Activated CD4-positive, alpha-beta memory T cell treated with anti-CD3 and anti-CD28 coated beads for 36 hours (primary cell): ENCODE measurements at regions of chr18 and their contacts with region 1.

Region 1: GRCh38 chr18:62584241-62585120 is 61.7 kb downstream of the ZCCHC2 start:
- DNase-seq: peak; percentile 91
- H3K4me3 Mint-ChIP-seq: no peak overlapping the region
- H3K27ac Mint-ChIP-seq: peak overlapping the region; percentile 94
- H3K4me1 Mint-ChIP-seq: peaks cover 39% of the 10 kb centered on the region
- H3K27me3 Mint-ChIP-seq: no peaks in the 10 kb centered on the region

Region 2: GRCh38 chr18:62324917-62325805 is 259.3 kb before region 1 on chr18 and contains the start of gene TNFRSF11A:
- CTCF ChIA-PET with region 1: no interaction called
- POLR2A ChIA-PET with region 1: no interaction called
- intact Hi-C with region 1: loop called (anchors 2 kb)
- DNase-seq: peak; percentile 79
- H3K4me3 Mint-ChIP-seq: peak within 1 kb of the TSS; percentile 79
- H3K27ac Mint-ChIP-seq: peak within 1 kb of the TSS; percentile 46
- H3K4me1 Mint-ChIP-seq: peaks cover 28% of the 10 kb centered on the region
- H3K27me3 Mint-ChIP-seq: peaks cover 68% of the 10 kb centered on the region
- total RNA-seq, gene TNFRSF11A: 5.7 to 6.1 TPM

Region 3: DNA sequence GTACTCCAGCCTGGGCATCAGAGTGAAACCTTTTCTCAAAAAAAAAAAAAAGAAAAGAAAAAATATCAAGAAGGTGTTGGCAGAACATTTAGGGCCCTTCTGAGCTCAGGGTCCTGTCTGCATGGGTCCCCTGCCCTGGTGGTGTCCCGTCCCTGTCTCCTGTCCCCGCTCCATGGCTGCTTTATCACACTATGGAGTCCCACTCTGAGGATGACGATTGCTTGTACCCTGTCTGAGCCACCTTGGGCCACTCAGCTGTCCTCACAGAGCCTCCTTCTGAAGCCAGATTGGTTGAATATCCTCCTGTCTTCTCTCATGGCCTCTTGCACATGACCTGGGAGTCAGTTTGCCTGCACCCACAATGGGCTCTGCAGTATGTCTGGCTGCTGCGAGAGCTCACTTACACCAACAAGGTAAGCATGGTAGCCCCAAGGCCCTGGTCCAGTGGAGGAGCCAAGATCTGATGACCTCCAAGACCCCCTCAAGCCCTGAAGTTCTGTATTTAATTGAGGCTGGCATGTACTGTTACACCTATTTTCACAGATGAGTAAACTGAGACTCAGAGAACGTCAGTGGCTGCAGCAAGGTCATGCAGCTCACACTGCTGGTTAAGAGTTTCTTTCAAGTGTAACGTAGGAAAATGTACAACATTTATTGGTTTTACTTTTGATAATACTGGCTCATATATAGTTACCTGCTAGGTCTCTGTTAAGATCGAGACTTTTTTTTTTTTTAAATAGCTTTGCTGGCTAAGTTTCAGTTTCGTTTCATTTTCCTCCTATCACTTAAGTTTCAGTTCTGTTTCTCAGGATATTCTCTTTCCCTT is 78.6 kb before region 1 on chr18:
- CTCF ChIA-PET with region 1: interaction called, 12 read pairs
- POLR2A ChIA-PET with region 1: interaction called, 4 read pairs
- intact Hi-C with region 1: loop called (anchors 1 kb)
- DNase-seq: peak; percentile 66
- H3K4me3 Mint-ChIP-seq: peak overlapping the region; percentile 58
- H3K27ac Mint-ChIP-seq: peak overlapping the region; percentile 88
- H3K4me1 Mint-ChIP-seq: peaks cover 24% of the 10 kb centered on the region
- H3K27me3 Mint-ChIP-seq: no peaks in the 10 kb centered on the region

Region 4: DNA sequence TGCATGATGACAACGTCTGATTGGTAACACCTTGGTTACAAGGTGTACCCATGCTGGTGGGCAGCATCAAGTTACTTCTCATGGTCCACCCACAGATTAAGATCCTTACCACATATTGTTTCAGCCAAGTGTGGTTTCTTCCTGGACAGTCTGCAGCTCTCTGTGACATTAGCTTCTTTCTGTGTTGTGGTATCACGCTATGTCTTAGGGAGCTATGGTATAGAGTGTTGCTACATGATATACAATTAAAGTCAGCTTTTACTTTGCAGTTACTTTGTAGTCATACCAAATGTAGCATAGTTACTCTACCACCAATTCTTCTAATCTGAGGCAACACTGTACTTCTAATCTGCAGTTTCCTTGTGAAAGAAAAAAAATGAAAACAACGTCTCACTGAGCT is 12.8 kb before region 1 on chr18:
- CTCF ChIA-PET with region 1: interaction called, 12 read pairs
- POLR2A ChIA-PET with region 1: interaction called, 3 read pairs
- intact Hi-C with region 1: no loop called
- DNase-seq: no peak
- H3K4me3 Mint-ChIP-seq: no peak overlapping the region
- H3K27ac Mint-ChIP-seq: peak overlapping the region; percentile 67
- H3K4me1 Mint-ChIP-seq: peaks cover 15% of the 10 kb centered on the region
- H3K27me3 Mint-ChIP-seq: no peaks in the 10 kb centered on the region

Region 5: DNA sequence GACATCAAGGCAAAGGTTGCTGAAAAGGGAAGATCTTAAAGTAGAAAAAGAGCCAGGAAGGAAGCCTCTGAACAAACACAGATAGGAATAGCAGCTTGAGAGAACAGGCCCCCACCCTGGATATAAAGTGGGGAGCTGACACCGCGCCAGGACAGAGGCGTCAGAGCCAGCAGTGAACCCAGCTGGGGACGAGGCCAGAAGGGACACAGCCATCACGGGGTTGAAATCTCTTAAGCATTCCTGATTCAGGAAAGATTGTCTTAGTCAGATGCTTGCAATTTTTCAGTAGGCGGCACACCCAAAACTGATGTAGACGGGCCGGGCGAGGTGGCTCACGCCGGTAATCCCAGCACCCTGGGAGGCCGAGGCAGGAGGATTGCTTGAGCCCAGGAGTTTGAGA is 37.1 kb after region 1 on chr18:
- CTCF ChIA-PET with region 1: no interaction called
- POLR2A ChIA-PET with region 1: no interaction called
- intact Hi-C with region 1: no loop called
- DNase-seq: no peak
- H3K4me3 Mint-ChIP-seq: no peak overlapping the region
- H3K27ac Mint-ChIP-seq: no peak overlapping the region
- H3K4me1 Mint-ChIP-seq: no peaks in the 10 kb centered on the region
- H3K27me3 Mint-ChIP-seq: peaks cover 14% of the 10 kb centered on the region

Region 6: DNA sequence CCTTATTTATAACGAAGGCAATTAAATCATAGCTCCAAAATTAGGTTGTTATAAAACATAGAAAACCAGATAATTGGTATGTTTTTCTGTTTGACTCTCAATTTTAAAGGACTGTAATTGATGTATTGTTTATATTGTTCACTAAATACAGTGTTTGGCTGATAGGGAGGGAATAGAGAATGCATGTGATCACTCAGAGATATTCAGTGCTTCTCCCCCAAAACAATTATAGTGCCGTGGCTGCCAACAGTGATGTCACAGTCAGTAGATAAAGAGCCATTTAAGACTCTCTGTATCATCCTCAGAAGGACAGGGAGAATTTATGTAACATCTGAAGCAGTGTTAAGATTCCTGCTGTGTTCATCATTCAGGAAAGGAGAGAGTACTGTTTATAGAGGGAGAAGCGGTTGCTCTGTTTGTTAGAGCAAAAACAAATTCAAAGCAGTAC is 200.5 kb after region 1 on chr18:
- CTCF ChIA-PET with region 1: no interaction called
- POLR2A ChIA-PET with region 1: no interaction called
- intact Hi-C with region 1: loop called (anchors 1 kb)
- DNase-seq: no peak
- H3K4me3 Mint-ChIP-seq: no peak overlapping the region
- H3K27ac Mint-ChIP-seq: peak overlapping the region; percentile 73
- H3K4me1 Mint-ChIP-seq: peaks cover 52% of the 10 kb centered on the region
- H3K27me3 Mint-ChIP-seq: peaks cover 3% of the 10 kb centered on the region

Region 7: GRCh38 chr18:62963507-62963906 is 379.0 kb after region 1 on chr18:
- CTCF ChIA-PET with region 1: interaction called, 22 read pairs
- POLR2A ChIA-PET with region 1: no interaction called
- intact Hi-C with region 1: loop called (anchors 1 kb)
- DNase-seq: no peak
- H3K4me3 Mint-ChIP-seq: no peak overlapping the region
- H3K27ac Mint-ChIP-seq: no peak overlapping the region
- H3K4me1 Mint-ChIP-seq: no peaks in the 10 kb centered on the region
- H3K27me3 Mint-ChIP-seq: no peaks in the 10 kb centered on the region